Endothelial cell of umbilical vein (primary cell): ENCODE measurements at regions of chr5 and their contacts with region 1.

Region 1: GRCh38 chr5:72244862-72245371 is 75.1 kb downstream of the MRPS27 start:
- DNase-seq: peak; percentile 78
- H3K4me3 ChIP-seq: no peak overlapping the region
- H3K27ac ChIP-seq: peak overlapping the region; percentile 49
- H3K4me1 ChIP-seq: peaks cover 54% of the 10 kb centered on the region
- H3K27me3 ChIP-seq: no peaks in the 10 kb centered on the region
- CTCF ChIP-seq: peak; percentile 47 to 52
- POLR2A ChIP-seq: no peak

Region 2: DNA sequence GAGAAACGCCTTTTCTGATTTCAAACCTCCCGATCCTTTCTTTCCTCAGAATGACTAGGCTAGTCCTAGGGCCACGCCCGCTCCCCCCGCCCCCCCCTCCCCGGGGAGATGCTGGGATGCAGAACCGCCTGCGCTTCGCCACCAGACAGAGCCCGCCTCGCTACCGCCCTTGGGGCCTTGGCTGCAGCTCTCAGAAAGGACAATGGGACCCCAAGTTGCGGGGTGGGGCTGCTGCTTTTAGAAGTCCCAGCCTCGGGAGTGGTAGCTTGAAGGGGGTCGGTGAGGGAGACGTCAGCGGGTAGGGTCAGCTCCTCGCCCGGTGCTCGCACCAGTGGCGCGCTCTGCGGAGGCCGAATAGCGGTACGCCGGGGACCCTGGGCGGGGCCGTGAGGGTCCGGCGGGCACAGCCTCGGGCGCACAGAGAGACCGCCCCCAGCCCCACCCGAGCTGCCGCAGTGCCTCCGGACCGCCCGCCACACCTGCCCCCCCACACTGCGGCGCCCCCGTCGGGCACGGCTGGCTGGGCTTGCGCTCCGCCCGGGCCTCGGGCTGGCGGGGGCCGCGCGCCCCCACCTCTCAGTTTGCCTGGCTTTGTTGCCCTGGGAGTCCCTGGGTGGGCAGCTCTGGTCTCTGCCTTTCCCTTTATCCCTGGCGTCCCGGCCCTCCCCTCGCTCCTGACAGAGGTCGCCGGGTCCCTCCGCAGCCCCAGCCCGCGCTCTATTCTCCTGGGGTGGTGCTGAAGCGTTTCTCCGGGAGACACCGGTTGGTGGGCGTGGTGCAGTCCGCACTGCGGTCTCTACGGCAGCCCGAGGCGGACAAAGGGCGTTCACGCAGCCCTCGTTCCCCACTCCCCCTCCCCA is 136.5 kb before region 1 on chr5:
- CTCF ChIA-PET with region 1: no interaction called
- POLR2A ChIA-PET with region 1: no interaction called
- dilution Hi-C with region 1: no loop called
- intact Hi-C with region 1: loop called (anchors 5 kb)
- DNase-seq: peak; percentile 81
- H3K4me3 ChIP-seq: peak overlapping the region; percentile 91 to 98 (median 97)
- H3K27ac ChIP-seq: peak overlapping the region; percentile 48
- H3K4me1 ChIP-seq: peaks cover 39% of the 10 kb centered on the region
- H3K27me3 ChIP-seq: no peaks in the 10 kb centered on the region
- CTCF ChIP-seq: no peak
- POLR2A ChIP-seq: peak; percentile 53

Region 3: DNA sequence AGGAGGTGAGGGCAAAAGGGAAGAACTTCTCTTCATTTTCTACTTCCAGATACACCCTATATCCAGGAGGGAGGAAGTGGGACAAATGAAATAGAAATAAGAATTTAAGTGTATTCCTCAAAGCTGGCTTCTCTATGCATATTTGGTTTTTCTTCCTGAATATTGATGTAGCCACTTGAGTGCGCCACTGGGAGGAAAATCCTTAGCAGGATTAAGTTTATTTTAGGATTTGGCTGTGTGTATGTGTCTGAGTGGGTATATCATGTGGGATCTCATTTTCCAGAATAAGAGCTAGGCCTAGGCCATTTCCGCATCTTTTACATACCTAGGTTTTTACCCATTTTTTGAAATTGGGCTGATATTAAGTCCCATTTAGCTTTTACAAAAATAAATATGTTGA is 95.2 kb before region 1 on chr5:
- CTCF ChIA-PET with region 1: no interaction called
- POLR2A ChIA-PET with region 1: no interaction called
- dilution Hi-C with region 1: no loop called
- intact Hi-C with region 1: loop called (anchors 5 kb)
- DNase-seq: no peak
- H3K4me3 ChIP-seq: no peak overlapping the region
- H3K27ac ChIP-seq: no peak overlapping the region
- H3K4me1 ChIP-seq: peaks cover 32% of the 10 kb centered on the region
- H3K27me3 ChIP-seq: no peaks in the 10 kb centered on the region
- CTCF ChIP-seq: no peak
- POLR2A ChIP-seq: no peak

Region 4: GRCh38 chr5:72179028-72179815 is 65.7 kb before region 1 on chr5:
- CTCF ChIA-PET with region 1: no interaction called
- POLR2A ChIA-PET with region 1: no interaction called
- dilution Hi-C with region 1: no loop called
- intact Hi-C with region 1: no loop called
- DNase-seq: no peak
- H3K4me3 ChIP-seq: no peak overlapping the region
- H3K27ac ChIP-seq: no peak overlapping the region
- H3K4me1 ChIP-seq: no peaks in the 10 kb centered on the region
- H3K27me3 ChIP-seq: no peaks in the 10 kb centered on the region
- CTCF ChIP-seq: no peak
- POLR2A ChIP-seq: no peak

Region 5: GRCh38 chr5:72234265-72234700 is 10.6 kb before region 1 on chr5:
- CTCF ChIA-PET with region 1: interaction called, 29 read pairs
- POLR2A ChIA-PET with region 1: interaction called, 3 read pairs
- dilution Hi-C with region 1: no loop called
- intact Hi-C with region 1: loop called (anchors 1 kb)
- DNase-seq: peak; percentile 89
- H3K4me3 ChIP-seq: no peak overlapping the region
- H3K27ac ChIP-seq: peak overlapping the region; percentile 78
- H3K4me1 ChIP-seq: peaks cover 43% of the 10 kb centered on the region
- H3K27me3 ChIP-seq: no peaks in the 10 kb centered on the region
- CTCF ChIP-seq: no peak
- POLR2A ChIP-seq: no peak

Region 6: GRCh38 chr5:72268753-72269410 is 24.0 kb after region 1 on chr5:
- CTCF ChIA-PET with region 1: interaction called, 10 read pairs
- POLR2A ChIA-PET with region 1: interaction called, 4 read pairs
- dilution Hi-C with region 1: no loop called
- intact Hi-C with region 1: no loop called
- DNase-seq: peak; percentile 70
- H3K4me3 ChIP-seq: no peak overlapping the region
- H3K27ac ChIP-seq: no peak overlapping the region
- H3K4me1 ChIP-seq: peaks cover 2% of the 10 kb centered on the region
- H3K27me3 ChIP-seq: no peaks in the 10 kb centered on the region
- CTCF ChIP-seq: peak; percentile 60 to 67
- POLR2A ChIP-seq: no peak

Region 7: DNA sequence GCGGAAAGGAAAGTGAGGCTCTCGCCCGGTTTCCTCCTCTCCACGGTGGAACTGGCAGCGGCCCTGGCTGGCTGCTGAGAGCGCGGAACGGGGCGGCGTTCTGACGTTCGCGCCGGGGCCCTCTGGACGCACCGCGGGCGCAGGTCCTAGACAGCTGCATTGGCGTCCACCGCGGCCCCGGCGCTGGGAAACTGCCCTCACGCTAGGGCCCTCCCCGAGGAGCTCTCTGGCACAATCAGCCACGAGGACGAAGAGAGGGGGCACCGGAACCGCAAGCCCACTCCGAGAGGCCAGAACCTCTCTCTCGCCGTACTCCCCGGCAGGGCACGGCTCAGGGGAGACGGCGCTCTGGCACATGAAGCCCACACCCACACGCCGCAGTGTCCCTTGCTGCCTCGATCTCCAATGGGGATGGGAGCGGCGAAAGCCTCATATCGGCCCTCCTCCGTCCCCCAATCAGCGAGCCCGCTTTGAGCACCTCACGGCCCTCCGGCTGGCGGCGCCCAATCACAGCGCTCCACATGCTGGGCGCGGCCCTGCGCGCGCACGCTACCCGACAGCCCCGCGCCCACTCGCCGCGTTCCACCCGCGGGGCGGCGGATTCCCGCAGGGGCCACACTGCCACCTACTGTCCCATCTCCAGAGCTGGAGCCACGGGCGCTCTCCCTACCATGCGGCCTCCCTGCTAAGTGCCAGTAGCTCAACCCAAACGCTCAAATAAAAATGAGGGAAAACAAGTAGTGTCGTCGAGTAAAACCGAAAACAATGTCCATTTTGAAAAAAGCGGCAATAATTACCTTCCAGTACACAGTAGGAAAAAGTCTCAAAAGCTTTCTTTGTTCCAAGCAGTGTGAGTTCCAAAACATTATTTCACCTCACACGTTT is 63.3 kb after region 1 on chr5:
- CTCF ChIA-PET with region 1: interaction called, 19 read pairs
- POLR2A ChIA-PET with region 1: interaction called, 5 read pairs
- dilution Hi-C with region 1: no loop called
- intact Hi-C with region 1: no loop called
- DNase-seq: peak; percentile 99
- H3K4me3 ChIP-seq: peak overlapping the region; percentile 30 to 77 (median 53)
- H3K27ac ChIP-seq: peak overlapping the region; percentile 45
- H3K4me1 ChIP-seq: peaks cover 10% of the 10 kb centered on the region
- H3K27me3 ChIP-seq: no peaks in the 10 kb centered on the region
- CTCF ChIP-seq: peak; percentile 88 to 91
- POLR2A ChIP-seq: peak; percentile 98